Activated CD4-positive, alpha-beta T cell treated with anti-CD3 and anti-CD28 coated beads for 36 hours (primary cell): ENCODE measurements at regions of chr3 and their contacts with region 1.

Region 1: DNA sequence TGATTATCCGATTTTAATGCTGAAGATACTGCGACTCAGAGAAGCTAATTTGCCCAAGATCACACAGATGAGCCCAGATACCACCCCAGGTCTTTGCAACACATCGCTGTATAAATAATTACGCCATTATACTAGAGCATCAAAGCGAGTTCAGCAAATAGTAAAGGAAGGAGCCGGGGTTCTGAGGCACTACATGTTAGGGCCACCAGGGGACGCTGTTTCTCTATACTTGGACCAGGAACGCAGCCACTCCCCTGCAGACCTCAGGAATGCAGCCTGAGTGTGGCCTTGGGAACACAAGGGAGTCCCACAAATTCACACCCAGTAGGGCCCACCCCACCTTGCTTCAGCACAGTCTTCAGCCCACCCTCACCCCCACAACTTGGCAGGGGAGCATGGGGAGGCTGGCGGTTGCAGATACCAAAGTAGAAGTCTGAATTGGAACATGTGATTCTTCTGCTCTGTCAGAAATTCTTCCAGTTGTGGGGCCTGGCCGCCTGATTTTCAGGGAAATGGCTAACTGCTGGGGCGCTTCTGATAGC is 57.8 kb upstream of the RYK start:
- DNase-seq: peak; percentile 86
- ATAC-seq: peak; percentile 89
- H3K4me3 Mint-ChIP-seq: no peak overlapping the region
- H3K27ac Mint-ChIP-seq: no peak overlapping the region
- H3K4me1 Mint-ChIP-seq: peaks cover 4% of the 10 kb centered on the region
- H3K27me3 Mint-ChIP-seq: peaks cover 32% of the 10 kb centered on the region

Region 2: DNA sequence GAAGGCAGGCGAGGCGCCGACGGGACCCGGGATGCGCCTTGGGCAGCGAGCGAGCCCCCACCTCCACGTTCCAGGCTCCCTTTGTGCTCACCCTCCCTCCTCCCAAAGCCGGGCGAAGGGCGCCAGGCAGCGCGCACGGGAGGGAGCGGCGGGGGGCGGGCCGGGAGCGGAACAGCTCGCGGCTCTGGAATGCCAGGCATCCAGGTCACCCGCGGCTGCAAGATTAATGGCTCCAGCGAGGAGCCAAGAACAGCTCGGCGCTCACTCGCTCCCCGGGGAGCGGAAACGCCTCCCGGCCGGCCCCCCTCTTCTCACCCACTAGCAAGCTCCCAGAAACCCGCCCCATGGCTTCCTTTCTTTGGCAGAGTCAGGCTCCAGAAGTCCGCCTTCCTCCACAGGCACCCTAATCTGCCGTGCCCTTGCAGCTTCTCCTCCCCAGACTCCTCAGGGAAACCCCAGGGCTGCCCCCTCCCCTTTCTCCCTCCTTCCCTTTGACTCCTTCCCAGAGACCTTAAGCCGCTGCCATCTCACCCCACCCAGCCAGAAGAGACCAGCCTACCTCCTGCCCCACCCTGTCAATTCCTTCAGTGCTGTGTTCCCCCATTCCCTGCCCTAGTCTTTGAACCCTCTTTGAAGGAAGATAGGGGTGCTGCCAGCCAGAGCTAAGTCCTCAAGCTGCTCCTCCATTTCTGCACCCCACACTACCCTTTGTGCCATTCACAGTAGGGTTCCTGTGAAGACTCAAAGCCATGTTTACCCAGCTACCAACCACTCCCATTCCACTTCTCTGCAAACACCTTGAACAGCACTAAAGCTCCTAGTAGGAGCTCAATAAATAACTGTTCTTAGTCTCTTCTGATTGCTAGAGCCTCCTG is 55.9 kb after region 1 on chr3:
- CTCF ChIA-PET with region 1: interaction called, 11 read pairs
- POLR2A ChIA-PET with region 1: no interaction called
- intact Hi-C with region 1: no loop called
- DNase-seq: peak; percentile 55
- ATAC-seq: peak; percentile 73
- H3K4me3 Mint-ChIP-seq: peak overlapping the region; percentile 38
- H3K27ac Mint-ChIP-seq: no peak overlapping the region
- H3K4me1 Mint-ChIP-seq: peaks cover 25% of the 10 kb centered on the region
- H3K27me3 Mint-ChIP-seq: no peaks in the 10 kb centered on the region

Region 3: DNA sequence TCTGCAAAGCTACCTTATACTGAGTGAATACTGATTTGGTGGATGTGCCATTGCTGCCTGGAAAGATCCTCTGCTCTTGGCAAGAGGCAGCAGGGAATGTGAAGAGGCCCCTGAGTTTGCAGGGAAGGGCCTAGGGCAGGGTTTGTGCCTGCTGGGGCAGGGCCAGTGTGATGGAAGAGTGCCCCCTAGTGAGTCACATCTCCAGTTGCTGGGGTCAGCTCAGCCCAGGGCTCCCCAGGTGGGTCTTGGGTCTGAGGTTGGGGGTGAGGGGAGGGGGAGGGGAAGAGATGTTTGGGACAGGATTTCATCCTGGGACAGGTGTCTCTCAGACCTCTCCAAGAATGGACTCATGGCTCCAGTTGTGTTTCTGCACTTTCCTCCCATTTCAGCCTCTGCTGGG is 70.0 kb after region 1 on chr3:
- CTCF ChIA-PET with region 1: interaction called, 3 read pairs
- POLR2A ChIA-PET with region 1: no interaction called
- intact Hi-C with region 1: loop called (anchors 1 to 2 kb)
- DNase-seq: peak; percentile 53
- ATAC-seq: no peak
- H3K4me3 Mint-ChIP-seq: no peak overlapping the region
- H3K27ac Mint-ChIP-seq: no peak overlapping the region
- H3K4me1 Mint-ChIP-seq: peaks cover 9% of the 10 kb centered on the region
- H3K27me3 Mint-ChIP-seq: peaks cover 21% of the 10 kb centered on the region

Region 4: GRCh38 chr3:134449277-134449676 is 140.9 kb after region 1 on chr3:
- CTCF ChIA-PET with region 1: interaction called, 12 read pairs
- POLR2A ChIA-PET with region 1: no interaction called
- intact Hi-C with region 1: loop called in 1 of 2 experiments (anchors 1 kb)
- DNase-seq: peak; percentile 27
- ATAC-seq: no peak
- H3K4me3 Mint-ChIP-seq: no peak overlapping the region
- H3K27ac Mint-ChIP-seq: no peak overlapping the region
- H3K4me1 Mint-ChIP-seq: no peaks in the 10 kb centered on the region
- H3K27me3 Mint-ChIP-seq: peaks cover 18% of the 10 kb centered on the region